ENCODE measurements at regions of chr2 and their contacts with region 1.

Region 1: GRCh38 chr2:42296226-42296625 is 64.8 kb downstream of the COX7A2L start:
- DNase-seq: no peak
- ATAC-seq: no peak
- H3K4me3 ChIP-seq: no peak overlapping the region
- H3K4me3 Mint-ChIP-seq: peak overlapping the region in 5 of 10 donors; percentile 3 to 77 (median 25)
- H3K27ac ChIP-seq: peak overlapping the region; percentile 24
- H3K27ac Mint-ChIP-seq: peak overlapping the region; percentile 34 to 93 (median 68)
- H3K4me1 ChIP-seq: peaks cover 35 to 53% of the 10 kb centered on the region in 2 donors
- H3K4me1 Mint-ChIP-seq: peaks cover 30 to 60% (median 53%) of the 10 kb centered on the region in 7 donors
- H3K27me3 ChIP-seq: no peaks in the 10 kb centered on the region
- H3K27me3 Mint-ChIP-seq: no peaks in the 10 kb centered on the region

Region 2: DNA sequence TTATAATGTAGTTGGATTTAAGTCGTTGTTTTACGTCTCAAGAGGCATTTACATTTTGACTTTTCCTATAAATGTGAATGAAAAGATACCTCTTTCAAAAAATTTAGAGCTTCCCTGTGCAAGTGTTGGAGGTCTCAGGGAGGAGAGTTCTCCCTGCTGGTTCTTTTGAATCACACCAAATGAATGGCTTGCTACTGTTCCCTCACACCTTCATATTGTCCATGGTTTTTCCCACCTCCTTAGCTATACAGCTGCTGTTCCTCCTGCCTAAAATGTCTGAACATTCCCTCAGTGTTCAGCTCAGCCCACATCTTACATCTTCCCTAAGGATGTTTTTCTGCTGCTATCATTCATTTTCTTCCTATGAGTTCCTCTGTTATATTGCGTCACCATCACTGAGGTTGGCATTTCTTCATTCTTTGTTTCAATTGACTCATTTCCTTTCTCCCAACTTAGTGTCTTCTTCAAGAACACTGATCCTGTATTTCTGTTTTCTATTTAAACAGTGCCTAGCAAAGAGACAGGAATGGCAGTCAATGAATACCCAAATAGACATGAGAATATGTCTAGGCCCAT is 18.8 kb after region 1 on chr2:
- CTCF ChIA-PET with region 1: interaction called, 3 read pairs
- POLR2A ChIA-PET with region 1: no interaction called
- intact Hi-C with region 1: loop called in 1 of 2 experiments (anchors 2 kb)
- DNase-seq: no peak
- ATAC-seq: no peak
- H3K4me3 ChIP-seq: no peak overlapping the region
- H3K4me3 Mint-ChIP-seq: no peak overlapping the region
- H3K27ac ChIP-seq: no peak overlapping the region
- H3K27ac Mint-ChIP-seq: peak overlapping the region in 8 of 9 donors; percentile 9 to 81 (median 70)
- H3K4me1 ChIP-seq: peaks cover 0 to 3% of the 10 kb centered on the region in 2 donors
- H3K4me1 Mint-ChIP-seq: peaks cover 7 to 37% (median 26%) of the 10 kb centered on the region in 7 donors
- H3K27me3 ChIP-seq: no peaks in the 10 kb centered on the region
- H3K27me3 Mint-ChIP-seq: no peaks in the 10 kb centered on the region

Region 3: DNA sequence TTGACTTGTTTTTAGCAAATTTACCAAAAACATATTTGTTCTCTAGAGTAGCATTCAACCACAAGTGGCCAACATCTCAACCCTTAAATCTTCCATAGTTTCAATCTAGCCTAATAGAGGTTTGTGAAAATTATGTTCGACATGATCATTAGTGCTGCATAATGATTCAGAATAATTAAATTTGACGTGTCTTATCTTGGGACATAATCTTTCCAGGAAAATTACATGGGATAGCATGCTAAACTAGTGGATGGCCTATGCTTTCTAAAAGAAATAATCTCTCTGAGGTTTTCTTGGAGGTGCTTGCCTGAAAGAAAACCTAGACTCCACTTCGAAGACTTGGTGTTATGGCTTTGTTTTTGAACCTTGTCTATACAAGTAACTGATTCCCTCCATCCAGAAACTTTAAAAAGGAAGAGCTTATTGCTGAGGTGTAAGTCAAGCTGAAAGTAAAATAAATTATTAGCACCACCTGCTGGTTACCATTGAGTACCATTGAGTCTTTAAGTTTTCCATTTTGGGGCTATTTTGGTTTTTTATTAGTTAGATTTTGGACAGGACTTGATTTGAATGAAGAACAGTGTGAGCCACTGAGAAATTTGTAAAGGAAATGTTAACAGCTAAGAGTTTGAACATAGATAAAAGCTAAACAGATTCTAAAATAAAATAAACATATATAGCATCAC is 32.1 kb after region 1 on chr2:
- CTCF ChIA-PET with region 1: no interaction called
- POLR2A ChIA-PET with region 1: no interaction called
- intact Hi-C with region 1: loop called in 1 of 2 experiments (anchors 2 kb)
- DNase-seq: peak in 5 of 9 donors; percentile 13 to 34 (median 32)
- ATAC-seq: peak; percentile 57
- H3K4me3 ChIP-seq: no peak overlapping the region
- H3K4me3 Mint-ChIP-seq: no peak overlapping the region
- H3K27ac ChIP-seq: no peak overlapping the region
- H3K27ac Mint-ChIP-seq: peak overlapping the region in 7 of 9 donors; percentile 12 to 77 (median 57)
- H3K4me1 ChIP-seq: no peaks in the 10 kb centered on the region
- H3K4me1 Mint-ChIP-seq: peaks cover 0 to 5% (median 0%) of the 10 kb centered on the region in 7 donors
- H3K27me3 ChIP-seq: no peaks in the 10 kb centered on the region
- H3K27me3 Mint-ChIP-seq: no peaks in the 10 kb centered on the region

Region 4: GRCh38 chr2:42542871-42543270 is 246.6 kb after region 1 on chr2:
- CTCF ChIA-PET with region 1: no interaction called
- POLR2A ChIA-PET with region 1: no interaction called
- intact Hi-C with region 1: no loop called
- DNase-seq: no peak
- ATAC-seq: no peak
- H3K4me3 ChIP-seq: no peak overlapping the region
- H3K4me3 Mint-ChIP-seq: no peak overlapping the region
- H3K27ac ChIP-seq: no peak overlapping the region
- H3K27ac Mint-ChIP-seq: peak overlapping the region in 1 of 9 donors; percentile 41
- H3K4me1 ChIP-seq: no peaks in the 10 kb centered on the region
- H3K4me1 Mint-ChIP-seq: peaks cover 0 to 13% (median 8%) of the 10 kb centered on the region in 7 donors
- H3K27me3 ChIP-seq: no peaks in the 10 kb centered on the region
- H3K27me3 Mint-ChIP-seq: no peaks in the 10 kb centered on the region

Measured in naive thymus-derived CD4-positive, alpha-beta T cell (primary cell).